IMR-90 (cell line): ENCODE measurements at regions of chr5 and their contacts with region 1.

Region 1: DNA sequence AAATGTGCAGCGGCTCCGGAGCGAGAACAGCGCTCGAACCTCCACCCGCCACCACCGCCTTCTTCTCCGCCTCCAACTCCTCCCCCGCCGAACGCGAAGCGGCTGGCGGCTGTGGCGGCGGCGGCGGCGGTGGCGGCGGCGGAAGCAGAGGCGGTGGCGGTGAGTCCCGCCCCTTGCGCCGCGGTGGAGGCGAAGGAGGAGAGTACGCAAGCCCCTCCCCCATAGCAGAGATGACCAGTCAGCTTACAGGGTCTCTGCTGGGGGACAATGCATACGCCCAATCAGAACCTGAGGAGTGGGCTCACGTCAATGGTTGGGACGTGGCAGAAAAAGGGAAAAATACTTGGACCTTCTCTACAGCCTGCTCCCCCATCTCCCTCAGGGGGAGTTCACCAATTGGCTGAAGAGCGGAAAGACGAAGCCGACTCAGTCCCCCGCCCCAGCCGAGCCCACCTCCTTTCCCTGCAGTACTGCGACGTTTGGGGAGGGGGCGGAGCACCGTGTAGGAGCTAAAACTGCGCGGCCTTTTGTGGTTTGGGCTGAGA is at the start of gene PJA2:
- DNase-seq: peak; percentile 100
- ATAC-seq: peak; percentile 92
- H3K4me3 ChIP-seq: peak within 1 kb of the TSS; percentile 97
- H3K27ac ChIP-seq: peak within 1 kb of the TSS; percentile 90
- H3K4me1 ChIP-seq: peaks cover 3% of the 10 kb centered on the region; the same call in 1 of the 2 replicates
- H3K27me3 ChIP-seq: no peaks in the 10 kb centered on the region
- CTCF ChIP-seq: peak; percentile 17; the same call in 1 of the 2 replicates
- POLR2A ChIP-seq: no peak; the same call in none of the 2 replicates
- RAD21 ChIP-seq: no peak; the same call in 1 of the 2 replicates
- total RNA-seq, gene PJA2: 70.6 and 112 TPM in 2 replicates

Region 2: DNA sequence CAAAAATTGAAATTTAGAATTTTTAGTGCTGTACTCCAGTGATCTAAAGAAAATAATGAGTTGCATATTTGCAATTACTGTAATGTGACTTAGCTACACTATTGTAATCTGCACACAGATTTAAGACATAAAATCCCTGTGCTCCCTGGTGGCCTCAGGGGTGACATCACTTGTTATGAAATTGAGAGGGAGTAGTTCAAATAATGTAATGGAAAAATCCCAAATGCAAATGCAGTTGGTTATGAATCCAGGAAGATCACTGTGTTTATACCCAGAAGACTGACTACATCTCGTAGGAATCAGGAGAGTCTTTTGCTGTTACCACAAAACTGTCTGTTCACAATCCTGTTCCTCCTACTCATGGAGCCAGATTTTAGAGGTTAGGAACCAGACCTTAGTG is 849.3 kb before region 1 on chr5:
- CTCF ChIA-PET with region 1: no interaction called
- POLR2A ChIA-PET with region 1: no interaction called
- dilution Hi-C with region 1: no loop called
- in situ Hi-C with region 1: no loop called
- intact Hi-C with region 1: loop called (anchors 2 kb)
- DNase-seq: peak; percentile 98
- ATAC-seq: peak; percentile 96
- H3K4me3 ChIP-seq: no peak overlapping the region
- H3K27ac ChIP-seq: peak overlapping the region; percentile 100; the same call in 1 of the 2 replicates
- H3K4me1 ChIP-seq: peaks cover 10% of the 10 kb centered on the region
- H3K27me3 ChIP-seq: no peaks in the 10 kb centered on the region
- CTCF ChIP-seq: no peak
- POLR2A ChIP-seq: no peak
- RAD21 ChIP-seq: 0 out of 2 replicates have a peak, but pooled peaks have one; percentile 1

Region 3: DNA sequence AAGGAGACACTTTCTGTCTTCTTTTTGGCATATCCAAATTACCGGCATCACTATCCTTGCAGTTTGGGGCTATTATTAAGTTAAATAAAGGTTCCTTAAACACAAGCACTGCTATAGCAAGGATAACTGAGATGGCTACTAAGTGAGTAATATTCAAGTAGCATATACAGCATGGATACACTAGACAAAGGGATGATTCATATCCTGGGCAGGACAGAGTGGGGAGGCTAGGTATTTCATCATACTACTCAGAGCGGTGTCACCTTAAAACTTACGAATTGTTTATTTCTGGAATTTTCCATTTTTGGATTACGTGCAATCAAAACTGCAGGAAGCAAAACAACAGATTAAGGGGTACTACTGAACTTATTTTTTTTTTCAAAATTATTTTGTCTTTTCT is 608.1 kb before region 1 on chr5:
- CTCF ChIA-PET with region 1: no interaction called
- POLR2A ChIA-PET with region 1: no interaction called
- dilution Hi-C with region 1: no loop called
- in situ Hi-C with region 1: no loop called
- intact Hi-C with region 1: loop called (anchors 5 kb)
- DNase-seq: peak; percentile 97
- ATAC-seq: peak; percentile 97
- H3K4me3 ChIP-seq: no peak overlapping the region; the same call in 1 of the 2 replicates
- H3K27ac ChIP-seq: no peak overlapping the region
- H3K4me1 ChIP-seq: peaks cover 12% of the 10 kb centered on the region
- H3K27me3 ChIP-seq: no peaks in the 10 kb centered on the region
- CTCF ChIP-seq: no peak
- POLR2A ChIP-seq: no peak
- RAD21 ChIP-seq: no peak

Region 4: DNA sequence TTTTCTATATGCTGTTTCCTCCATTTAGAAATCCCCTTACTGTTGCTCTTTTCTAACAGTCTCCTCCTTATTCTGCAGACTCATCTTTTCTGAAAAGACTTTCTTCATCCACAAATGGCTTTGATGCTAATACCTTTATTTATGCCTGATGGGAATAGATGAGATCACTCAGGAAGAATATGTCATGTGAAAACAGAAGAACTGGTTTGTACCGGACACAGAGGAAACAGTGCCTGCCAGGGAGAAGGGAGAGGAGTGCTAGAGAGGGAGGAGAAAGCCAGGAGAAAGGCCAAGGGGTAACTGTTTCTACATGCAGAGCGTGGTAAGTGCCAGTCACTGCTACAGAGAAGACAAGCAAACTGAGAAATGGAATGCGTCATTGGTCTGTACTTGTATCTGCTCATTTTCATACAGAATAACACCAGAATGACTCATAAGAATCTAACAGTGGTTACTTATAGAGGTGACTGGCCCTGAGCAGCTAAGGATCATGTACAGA is 45.7 kb after region 1 on chr5:
- CTCF ChIA-PET with region 1: no interaction called
- POLR2A ChIA-PET with region 1: no interaction called
- dilution Hi-C with region 1: no loop called
- in situ Hi-C with region 1: no loop called
- intact Hi-C with region 1: loop called (anchors 2 kb)
- DNase-seq: peak; percentile 98
- ATAC-seq: peak; percentile 93
- H3K4me3 ChIP-seq: no peak overlapping the region
- H3K27ac ChIP-seq: peak overlapping the region; percentile 40; the same call in 1 of the 2 replicates
- H3K4me1 ChIP-seq: peaks cover 3% of the 10 kb centered on the region; the same call in 1 of the 2 replicates
- H3K27me3 ChIP-seq: no peaks in the 10 kb centered on the region
- CTCF ChIP-seq: no peak
- POLR2A ChIP-seq: no peak
- RAD21 ChIP-seq: 0 out of 2 replicates have a peak, but pooled peaks have one; percentile 7

Region 5: DNA sequence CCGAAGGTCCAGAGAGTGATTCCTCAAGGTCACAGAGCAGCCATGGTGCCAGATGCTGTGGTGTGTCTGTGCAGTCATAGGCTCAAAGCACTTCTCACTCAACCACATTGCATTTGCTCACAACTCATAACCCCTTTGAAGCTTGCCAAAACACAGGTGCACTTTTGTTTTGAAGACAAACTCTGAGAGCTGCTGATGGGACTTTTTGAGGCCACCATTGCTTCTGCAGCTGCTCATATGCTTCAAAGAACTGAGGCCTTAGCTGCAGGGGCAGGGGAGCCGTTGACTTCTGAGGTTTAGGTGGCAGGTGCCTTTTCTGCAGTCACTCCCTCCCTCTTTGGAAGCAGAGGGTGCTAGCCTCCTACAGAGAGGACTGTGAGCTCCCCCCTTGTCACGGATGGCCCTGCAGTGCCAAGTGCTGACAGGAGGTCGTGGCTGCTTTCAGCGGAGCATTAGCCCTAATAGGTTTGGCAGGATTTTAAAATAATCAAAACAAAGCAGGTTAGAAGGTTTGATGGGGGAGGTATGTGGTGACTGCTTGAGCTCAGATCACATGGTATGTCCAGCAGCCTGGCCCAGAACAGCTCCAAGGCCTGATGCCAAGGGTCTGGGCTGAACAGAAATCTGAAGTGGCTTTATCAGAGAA is 511.9 kb after region 1 on chr5:
- CTCF ChIA-PET with region 1: no interaction called
- POLR2A ChIA-PET with region 1: no interaction called
- dilution Hi-C with region 1: no loop called
- in situ Hi-C with region 1: no loop called
- intact Hi-C with region 1: no loop called
- DNase-seq: no peak
- ATAC-seq: no peak
- H3K4me3 ChIP-seq: no peak overlapping the region
- H3K27ac ChIP-seq: no peak overlapping the region
- H3K4me1 ChIP-seq: no peaks in the 10 kb centered on the region
- H3K27me3 ChIP-seq: no peaks in the 10 kb centered on the region
- CTCF ChIP-seq: no peak
- POLR2A ChIP-seq: no peak
- RAD21 ChIP-seq: no peak